GM10248 (cell line): ENCODE measurements at regions of chr13 and their contacts with region 1.

Region 1: DNA sequence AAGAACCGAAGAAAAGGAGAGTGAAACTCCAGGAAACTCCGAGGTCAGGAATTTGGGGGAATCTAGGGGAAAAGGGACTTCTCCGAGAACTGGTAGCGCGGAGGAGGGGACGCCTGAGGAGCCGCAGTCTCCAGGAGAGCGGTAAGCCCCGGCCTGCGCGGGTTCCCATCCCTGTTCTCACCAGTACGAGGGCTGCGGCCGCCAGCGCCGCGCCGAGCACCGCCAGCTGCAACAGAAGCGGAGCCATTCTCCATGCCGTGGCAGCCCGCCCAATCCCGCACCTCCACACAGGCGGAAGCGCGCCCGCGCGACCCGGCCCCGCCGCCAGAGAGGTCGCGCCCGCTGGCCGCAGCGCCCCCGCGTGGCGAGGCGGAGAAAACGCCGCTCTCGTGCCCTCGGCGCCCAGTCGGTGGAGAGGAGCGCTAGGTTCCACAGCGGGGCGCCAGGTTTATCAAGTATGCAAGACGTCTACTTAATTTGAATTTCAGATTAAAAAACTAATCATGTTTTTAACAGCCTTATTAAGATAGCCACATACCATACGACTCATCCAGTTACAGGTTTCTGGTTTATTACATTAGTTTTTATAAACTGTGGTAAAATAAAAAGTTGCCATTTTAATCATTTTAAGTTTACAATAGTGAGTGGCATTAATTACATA is at the start of gene ALG5:
- DNase-seq: peak; percentile 90
- CTCF ChIP-seq: peak; percentile 99

Region 2: DNA sequence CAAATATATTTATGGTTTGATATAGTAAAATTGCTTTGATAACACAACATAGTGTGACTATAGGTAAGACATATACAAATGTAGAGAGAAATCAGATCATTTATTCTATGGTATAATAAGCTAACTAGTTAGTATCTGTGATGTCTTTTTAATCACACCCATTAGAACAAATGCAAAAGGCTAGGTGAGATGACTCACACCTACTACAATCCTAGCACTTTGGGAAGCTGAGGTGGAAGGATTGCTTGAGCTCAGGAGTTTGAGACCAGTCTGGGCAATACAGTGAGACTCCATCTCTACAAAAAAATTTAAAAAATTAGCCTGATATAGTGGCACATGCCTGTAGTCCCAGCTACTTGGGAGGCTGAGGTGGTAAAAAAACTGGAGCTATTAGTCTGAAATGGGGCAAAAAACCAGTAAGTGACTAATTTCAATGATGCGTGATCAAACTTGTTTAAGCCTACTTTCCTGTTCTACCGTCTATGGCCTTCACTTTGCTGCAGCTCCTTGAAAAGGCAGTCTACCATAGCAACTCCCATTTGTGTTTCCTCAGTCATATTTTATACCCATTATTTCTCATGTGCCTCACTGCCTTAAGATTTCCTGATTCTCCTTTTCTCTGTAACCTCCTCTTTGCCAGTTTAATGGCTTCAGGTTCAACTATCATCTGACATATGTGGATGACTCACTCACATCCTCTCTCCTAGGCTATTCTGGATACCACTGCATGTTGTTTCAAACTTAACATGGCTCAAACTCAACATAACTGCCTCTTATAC is 12.5 kb before region 1 on chr13:
- CTCF ChIA-PET with region 1: interaction called, 18 read pairs
- POLR2A ChIA-PET with region 1: no interaction called
- DNase-seq: no peak
- CTCF ChIP-seq: no peak

Region 3: DNA sequence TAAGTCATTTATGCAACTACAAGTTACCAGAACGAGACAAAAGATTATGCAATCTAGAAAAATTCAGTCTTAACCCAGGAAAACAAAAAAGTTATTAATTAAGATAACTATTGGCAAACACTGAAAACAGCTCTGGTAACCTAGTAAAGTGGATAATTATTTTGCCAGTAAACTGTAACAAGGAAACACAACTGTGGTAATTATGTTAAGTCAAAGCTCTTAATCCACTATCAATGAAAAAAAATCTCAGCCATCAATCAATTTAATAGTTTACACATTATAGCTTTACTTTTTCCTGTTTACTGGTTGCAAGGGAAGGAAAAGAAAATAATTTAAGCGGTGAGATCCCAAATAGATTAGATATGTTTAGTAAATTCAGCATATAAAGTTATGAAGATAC is 12.6 kb after region 1 on chr13:
- CTCF ChIA-PET with region 1: interaction called, 13 read pairs
- POLR2A ChIA-PET with region 1: interaction called, 6 read pairs
- DNase-seq: no peak
- CTCF ChIP-seq: no peak

Region 4: GRCh38 chr13:37029617-37030016 is 30.4 kb after region 1 on chr13:
- CTCF ChIA-PET with region 1: interaction called, 18 read pairs
- POLR2A ChIA-PET with region 1: no interaction called
- DNase-seq: no peak
- CTCF ChIP-seq: no peak